B cell (primary cell): ENCODE measurements at regions of chr1 and their contacts with region 1.

Region 1: DNA sequence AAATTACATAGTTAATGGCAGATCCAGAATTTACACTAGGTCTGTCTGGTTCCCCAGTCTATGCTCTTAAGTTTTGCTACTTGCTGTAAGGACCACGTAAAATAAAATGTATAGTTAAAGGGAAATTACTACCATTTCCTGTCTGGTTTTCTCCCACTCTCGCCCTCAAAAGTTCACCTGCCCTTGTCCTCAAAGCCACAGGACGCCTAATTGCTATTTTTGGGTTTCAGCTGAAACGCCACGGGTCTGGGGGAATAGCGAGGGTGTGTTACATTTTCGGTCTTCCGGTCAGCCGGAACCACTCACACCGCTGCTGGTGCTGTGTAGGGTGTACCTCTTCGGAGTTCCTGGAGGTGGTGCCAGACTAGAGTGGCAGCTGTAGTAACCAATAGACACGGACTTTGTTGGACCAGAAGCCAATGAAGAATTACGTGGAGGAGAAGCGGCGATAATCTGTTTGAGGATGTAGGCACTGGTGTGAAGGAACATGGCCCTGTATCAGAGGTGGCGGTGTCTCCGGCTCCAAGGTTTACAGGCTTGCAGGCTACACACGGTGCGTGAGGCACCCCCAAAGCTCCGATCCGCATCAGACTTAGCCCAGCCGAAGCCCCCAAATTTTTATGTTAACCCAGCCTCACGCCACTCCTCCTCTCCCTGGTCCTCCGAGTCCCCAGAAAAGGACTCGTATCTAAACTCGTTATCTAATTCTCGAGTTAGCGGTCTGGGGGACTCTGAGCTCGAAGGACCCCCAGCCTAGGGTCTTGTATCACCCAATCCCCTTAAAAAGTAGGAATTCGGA is at the start of gene TARS2:
- DNase-seq: peak; percentile 97
- ATAC-seq: peak; percentile 100
- H3K4me3 ChIP-seq: peak within 1 kb of the TSS; percentile 69 to 95 (median 84)
- H3K4me3 Mint-ChIP-seq: peak within 1 kb of the TSS; percentile 93
- H3K27ac ChIP-seq: peak within 1 kb of the TSS; percentile 75 to 78
- H3K27ac Mint-ChIP-seq: peak within 1 kb of the TSS; percentile 98
- H3K4me1 ChIP-seq: peaks cover 7 to 10% of the 10 kb centered on the region in 2 donors
- H3K4me1 Mint-ChIP-seq: peaks cover 16% of the 10 kb centered on the region
- H3K27me3 ChIP-seq: no peaks in the 10 kb centered on the region
- H3K27me3 Mint-ChIP-seq: no peaks in the 10 kb centered on the region
- CTCF ChIP-seq: no peak
- total RNA-seq, gene TARS2: 48.4 and 53.6 TPM in 2 replicates

Region 2: GRCh38 chr1:150293433-150294168 is 193.6 kb before region 1 on chr1 and contains the start of gene MRPS21:
- CTCF ChIA-PET with region 1: no interaction called
- POLR2A ChIA-PET with region 1: no interaction called
- intact Hi-C with region 1: loop called (anchors 1 kb)
- DNase-seq: peak; percentile 94
- ATAC-seq: peak; percentile 97
- H3K4me3 ChIP-seq: peak within 1 kb of the TSS; percentile 68 to 96 (median 78)
- H3K4me3 Mint-ChIP-seq: peak within 1 kb of the TSS; percentile 95
- H3K27ac ChIP-seq: peak within 1 kb of the TSS; percentile 78 to 97
- H3K27ac Mint-ChIP-seq: peak within 1 kb of the TSS; percentile 98
- H3K4me1 ChIP-seq: peaks cover 13 to 18% of the 10 kb centered on the region in 2 donors
- H3K4me1 Mint-ChIP-seq: peaks cover 20% of the 10 kb centered on the region
- H3K27me3 ChIP-seq: no peaks in the 10 kb centered on the region
- H3K27me3 Mint-ChIP-seq: peaks cover 4% of the 10 kb centered on the region
- CTCF ChIP-seq: no peak
- total RNA-seq, gene MRPS21: 56.5 and 60.4 TPM in 2 replicates

Region 3: DNA sequence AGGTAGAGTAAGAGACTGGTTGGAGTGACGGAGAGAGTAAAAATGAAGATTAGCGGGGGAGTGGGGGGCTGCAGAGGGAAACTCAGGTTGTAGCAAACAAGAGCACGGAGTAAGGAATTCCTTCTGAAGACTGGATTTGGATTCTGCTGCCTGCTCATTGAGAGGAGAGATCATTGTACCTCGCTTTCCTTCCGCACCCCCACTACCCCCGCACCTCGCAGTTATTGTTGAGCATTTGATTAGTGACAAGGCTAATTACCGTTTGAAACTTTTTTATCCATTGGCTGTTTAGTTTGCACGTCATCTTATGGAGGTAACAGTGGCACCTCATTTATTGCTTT is 165.4 kb before region 1 on chr1:
- CTCF ChIA-PET with region 1: no interaction called
- POLR2A ChIA-PET with region 1: no interaction called
- intact Hi-C with region 1: loop called (anchors 1 kb)
- DNase-seq: no peak
- ATAC-seq: no peak
- H3K4me3 ChIP-seq: peak overlapping the region; percentile 85 to 99 (median 92)
- H3K4me3 Mint-ChIP-seq: peak overlapping the region; percentile 98
- H3K27ac ChIP-seq: peak overlapping the region; percentile 86 to 97
- H3K27ac Mint-ChIP-seq: peak overlapping the region; percentile 98
- H3K4me1 ChIP-seq: peaks cover 13% of the 10 kb centered on the region in 2 donors
- H3K4me1 Mint-ChIP-seq: peaks cover 24% of the 10 kb centered on the region
- H3K27me3 ChIP-seq: no peaks in the 10 kb centered on the region
- H3K27me3 Mint-ChIP-seq: no peaks in the 10 kb centered on the region
- CTCF ChIP-seq: no peak

Region 4: DNA sequence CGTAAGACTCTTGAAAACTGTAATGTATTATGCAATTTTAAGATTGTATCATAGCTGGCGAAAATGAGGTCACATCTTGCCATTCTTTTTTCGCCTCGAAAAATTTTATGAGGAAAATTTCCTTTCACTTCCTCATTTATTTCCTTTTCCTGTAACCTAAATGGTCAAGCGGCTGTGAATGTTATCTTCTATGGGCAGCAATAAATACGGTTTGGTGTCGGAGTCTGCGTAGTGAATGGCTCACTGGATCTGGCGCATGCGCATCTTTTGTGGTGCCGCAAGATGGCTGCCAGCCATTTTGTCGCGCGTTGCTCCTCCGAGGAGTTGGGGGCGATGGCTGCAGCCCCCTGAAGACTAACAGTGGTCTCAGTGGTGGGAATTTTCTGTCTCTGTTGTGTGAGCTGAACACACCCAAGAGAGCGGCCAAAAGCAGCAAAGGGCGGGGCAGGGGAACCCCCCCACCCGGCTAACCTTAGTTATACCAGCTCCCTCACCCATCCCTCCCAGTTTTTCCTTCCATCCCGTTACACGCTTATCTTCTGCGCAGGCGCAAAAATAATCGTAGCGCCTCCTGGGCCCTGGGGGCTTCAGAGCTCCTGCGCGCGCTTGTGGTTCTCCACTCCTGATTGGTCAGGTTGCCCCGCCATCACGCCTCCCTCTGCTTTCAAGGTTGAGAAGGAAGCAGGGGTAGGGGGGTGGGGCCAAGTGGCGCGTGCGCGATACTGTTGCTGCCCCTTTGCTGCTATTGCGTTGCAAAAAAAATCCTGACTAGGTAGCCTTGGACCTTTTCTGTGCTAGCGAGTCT is 123.5 kb before region 1 on chr1 and contains the start of gene RPRD2:
- CTCF ChIA-PET with region 1: no interaction called
- POLR2A ChIA-PET with region 1: no interaction called
- intact Hi-C with region 1: loop called (anchors 1 kb)
- DNase-seq: peak; percentile 99
- ATAC-seq: peak; percentile 94
- H3K4me3 ChIP-seq: peak within 1 kb of the TSS; percentile 74 to 99 (median 90)
- H3K4me3 Mint-ChIP-seq: peak within 1 kb of the TSS; percentile 99
- H3K27ac ChIP-seq: peak within 1 kb of the TSS; percentile 87 to 90
- H3K27ac Mint-ChIP-seq: peak within 1 kb of the TSS; percentile 99
- H3K4me1 ChIP-seq: peaks cover 21 to 24% of the 10 kb centered on the region in 2 donors
- H3K4me1 Mint-ChIP-seq: peaks cover 31% of the 10 kb centered on the region
- H3K27me3 ChIP-seq: no peaks in the 10 kb centered on the region
- H3K27me3 Mint-ChIP-seq: no peaks in the 10 kb centered on the region
- CTCF ChIP-seq: no peak
- total RNA-seq, gene RPRD2: 49.1 and 51.4 TPM in 2 replicates

Region 5: GRCh38 chr1:150444232-150444631 is 42.9 kb before region 1 on chr1:
- CTCF ChIA-PET with region 1: no interaction called
- POLR2A ChIA-PET with region 1: no interaction called
- intact Hi-C with region 1: no loop called
- DNase-seq: no peak
- ATAC-seq: no peak
- H3K4me3 ChIP-seq: no peak overlapping the region
- H3K4me3 Mint-ChIP-seq: no peak overlapping the region
- H3K27ac ChIP-seq: no peak overlapping the region
- H3K27ac Mint-ChIP-seq: no peak overlapping the region
- H3K4me1 ChIP-seq: no peaks in the 10 kb centered on the region
- H3K4me1 Mint-ChIP-seq: no peaks in the 10 kb centered on the region
- H3K27me3 ChIP-seq: no peaks in the 10 kb centered on the region
- H3K27me3 Mint-ChIP-seq: no peaks in the 10 kb centered on the region
- CTCF ChIP-seq: no peak

Region 6: GRCh38 chr1:150515328-150516048 is 28.3 kb after region 1 on chr1 and contains the start of gene FALEC:
- CTCF ChIA-PET with region 1: interaction called, 3 read pairs
- POLR2A ChIA-PET with region 1: interaction called, 24 read pairs
- intact Hi-C with region 1: loop called (anchors 1 kb)
- DNase-seq: peak; percentile 94
- ATAC-seq: peak; percentile 99
- H3K4me3 ChIP-seq: peak within 1 kb of the TSS; percentile 50 to 86 (median 80)
- H3K4me3 Mint-ChIP-seq: peak within 1 kb of the TSS; percentile 90
- H3K27ac ChIP-seq: peak within 1 kb of the TSS; percentile 59 to 78
- H3K27ac Mint-ChIP-seq: peak within 1 kb of the TSS; percentile 83
- H3K4me1 ChIP-seq: peaks cover 22 to 26% of the 10 kb centered on the region in 2 donors
- H3K4me1 Mint-ChIP-seq: peaks cover 25% of the 10 kb centered on the region
- H3K27me3 ChIP-seq: no peaks in the 10 kb centered on the region
- H3K27me3 Mint-ChIP-seq: no peaks in the 10 kb centered on the region
- CTCF ChIP-seq: no peak
- total RNA-seq, gene FALEC: 2.0 and 2.6 TPM in 2 replicates

Region 7: DNA sequence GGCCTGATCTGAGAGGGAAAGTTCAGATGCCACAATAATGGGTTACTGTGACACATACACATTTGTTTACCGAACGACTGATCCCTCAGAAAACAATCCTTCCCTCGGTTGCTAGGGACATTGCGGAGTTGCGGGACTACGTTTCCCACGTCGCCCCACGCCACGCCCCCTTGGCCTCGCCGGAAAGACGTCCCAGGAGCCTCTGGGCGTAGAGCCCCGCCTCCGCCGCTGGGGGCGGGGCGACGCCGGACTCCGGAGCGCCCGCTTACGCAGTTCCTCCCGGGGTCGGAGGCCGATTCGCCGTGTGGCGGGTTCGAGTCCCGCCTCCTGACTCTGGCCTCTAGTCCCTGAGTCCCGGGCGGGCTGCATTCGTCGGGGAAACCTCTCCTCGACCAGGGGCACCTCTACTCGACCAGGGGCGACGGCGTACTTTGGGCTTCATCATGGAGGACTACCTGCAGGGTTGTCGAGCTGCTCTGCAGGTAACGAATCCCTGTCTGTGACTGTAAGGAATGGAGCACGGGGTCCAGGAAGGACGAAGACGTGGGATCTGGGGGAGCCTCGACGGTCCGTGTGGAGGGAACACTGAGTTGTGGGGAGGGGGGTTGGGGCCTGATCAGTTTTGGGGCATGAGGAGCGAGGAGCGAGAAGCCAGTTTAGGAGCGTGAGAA is 521.2 kb after region 1 on chr1 and contains the start of gene PRUNE1:
- CTCF ChIA-PET with region 1: no interaction called
- POLR2A ChIA-PET with region 1: no interaction called
- intact Hi-C with region 1: loop called (anchors 1 kb)
- DNase-seq: peak; percentile 98
- ATAC-seq: peak; percentile 97
- H3K4me3 ChIP-seq: peak within 1 kb of the TSS; percentile 74 to 98 (median 85)
- H3K4me3 Mint-ChIP-seq: peak within 1 kb of the TSS; percentile 90
- H3K27ac ChIP-seq: peak within 1 kb of the TSS; percentile 82 to 95
- H3K27ac Mint-ChIP-seq: peak within 1 kb of the TSS; percentile 94
- H3K4me1 ChIP-seq: peaks cover 39 to 55% of the 10 kb centered on the region in 2 donors
- H3K4me1 Mint-ChIP-seq: peaks cover 66% of the 10 kb centered on the region
- H3K27me3 ChIP-seq: no peaks in the 10 kb centered on the region
- H3K27me3 Mint-ChIP-seq: no peaks in the 10 kb centered on the region
- CTCF ChIP-seq: no peak
- total RNA-seq, gene PRUNE1: 20.8 and 21.3 TPM in 2 replicates